Aorta (tissue), 5 donors: ENCODE measurements at regions of chr12 and their contacts with region 1.

Region 1: GRCh38 chr12:103868215-103868614 is 27.2 kb upstream of the NT5DC3 start:
- DNase-seq: no peak
- ATAC-seq: peak; percentile 55
- H3K4me3 ChIP-seq: no peak overlapping the region
- H3K27ac ChIP-seq: peak overlapping the region in 1 of 2 donors; percentile 97
- H3K4me1 ChIP-seq: peaks cover 0 to 3% of the 10 kb centered on the region in 2 donors
- H3K27me3 ChIP-seq: no peaks in the 10 kb centered on the region

Region 2: DNA sequence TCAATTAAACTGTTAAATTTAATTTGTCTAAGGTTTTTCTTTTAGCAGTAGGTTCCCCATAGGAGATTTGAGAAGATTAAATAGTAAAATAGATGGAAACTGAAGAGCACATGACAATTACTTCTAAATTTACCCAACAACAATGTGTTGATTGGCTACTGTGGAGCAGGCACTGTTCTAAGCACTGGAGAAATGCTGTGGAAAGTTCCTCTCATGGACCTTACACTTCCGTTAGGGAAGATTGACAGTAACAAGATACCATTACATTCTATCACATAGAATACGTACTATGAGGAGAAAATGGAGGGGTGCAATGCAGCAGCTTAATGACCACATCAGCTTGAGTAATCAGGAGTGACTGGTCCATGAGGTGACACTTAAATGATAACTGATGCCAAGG is 289.3 kb before region 1 on chr12:
- intact Hi-C with region 1: loop called (anchors 5 to 10 kb)
- DNase-seq: no peak
- ATAC-seq: no peak
- H3K4me3 ChIP-seq: no peak overlapping the region
- H3K27ac ChIP-seq: no peak overlapping the region
- H3K4me1 ChIP-seq: no peaks in the 10 kb centered on the region
- H3K27me3 ChIP-seq: no peaks in the 10 kb centered on the region

Region 3: GRCh38 chr12:103626498-103626897 is 241.7 kb before region 1 on chr12:
- intact Hi-C with region 1: loop called in 1 of 2 experiments (anchors 2 kb)
- DNase-seq: peak in 1 of 2 donors; percentile 61
- ATAC-seq: no peak
- H3K4me3 ChIP-seq: no peak overlapping the region
- H3K27ac ChIP-seq: no peak overlapping the region
- H3K4me1 ChIP-seq: peaks cover 0 to 5% of the 10 kb centered on the region in 2 donors
- H3K27me3 ChIP-seq: no peaks in the 10 kb centered on the region

Region 4: DNA sequence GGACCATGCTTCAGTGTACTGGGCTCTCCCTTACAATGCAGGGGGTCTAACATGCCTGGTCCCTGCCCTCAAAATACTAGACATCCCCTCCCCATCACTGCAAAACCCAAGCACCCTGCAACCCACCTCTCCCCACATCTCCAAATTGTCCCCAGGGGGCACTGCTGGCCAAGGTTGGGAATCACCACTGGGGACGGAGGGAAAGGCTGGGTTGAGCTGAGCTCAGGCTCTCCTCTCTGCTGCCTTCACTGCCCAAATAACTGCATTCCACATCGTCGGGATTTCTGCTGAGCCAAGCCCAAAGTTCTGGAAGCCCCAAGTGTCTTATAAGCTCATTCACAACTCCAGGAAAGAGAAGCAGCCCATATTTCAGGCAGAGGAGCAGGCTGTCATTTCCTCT is 96.7 kb before region 1 on chr12:
- intact Hi-C with region 1: loop called in 1 of 2 experiments (anchors 2 kb)
- DNase-seq: no peak
- ATAC-seq: peak; percentile 80
- H3K4me3 ChIP-seq: no peak overlapping the region
- H3K27ac ChIP-seq: no peak overlapping the region
- H3K4me1 ChIP-seq: no peaks in the 10 kb centered on the region
- H3K27me3 ChIP-seq: no peaks in the 10 kb centered on the region

Region 5: DNA sequence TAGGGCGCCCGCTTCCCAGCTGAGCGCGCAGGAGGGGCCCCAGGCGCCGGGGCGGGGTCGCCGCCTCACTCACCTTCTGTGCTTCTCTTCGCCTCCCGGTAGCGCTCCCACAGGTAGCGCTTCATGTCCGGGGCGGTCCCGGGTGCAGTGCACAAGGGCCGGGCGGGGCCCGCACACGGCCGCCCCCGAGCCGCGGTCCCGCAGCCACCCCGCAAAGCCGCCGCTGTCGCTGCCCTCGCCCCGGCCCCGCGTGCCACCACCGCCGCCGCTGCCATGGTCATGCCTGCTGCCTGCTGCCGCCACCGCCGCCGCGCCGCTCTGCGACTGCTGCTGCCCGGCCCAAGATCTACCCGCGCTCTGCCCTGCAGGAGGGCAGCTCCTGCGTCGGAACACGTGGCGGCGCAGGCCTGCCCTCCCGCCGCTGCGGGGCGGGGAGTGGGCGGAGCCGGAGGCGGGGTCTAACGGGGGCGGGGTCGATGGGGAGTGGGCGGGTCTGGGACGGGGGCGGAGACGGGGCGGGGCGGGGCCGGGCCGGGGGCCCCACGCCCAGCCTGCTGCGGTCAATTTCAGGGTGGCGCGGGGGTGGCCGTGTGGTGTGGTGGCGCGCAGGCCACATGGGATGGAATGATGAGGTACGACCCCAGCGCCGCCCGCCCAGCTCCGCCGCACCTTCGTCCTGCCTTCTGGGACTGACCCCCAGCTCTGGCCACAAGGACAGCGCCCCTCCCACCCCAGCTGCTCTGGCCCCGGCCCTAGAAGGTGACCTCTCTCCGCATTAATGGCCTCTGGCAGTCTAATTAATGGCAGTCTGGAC is 27.1 kb before region 1 on chr12 and contains the start of gene NT5DC3:
- intact Hi-C with region 1: loop called in 1 of 2 experiments (anchors 2 kb)
- DNase-seq: peak; percentile 88 to 95
- ATAC-seq: peak; percentile 95
- H3K4me3 ChIP-seq: peak within 1 kb of the TSS; percentile 96 to 97
- H3K27ac ChIP-seq: peak within 1 kb of the TSS; percentile 78 to 88
- H3K4me1 ChIP-seq: no peaks in the 10 kb centered on the region
- H3K27me3 ChIP-seq: no peaks in the 10 kb centered on the region
- total RNA-seq, gene NT5DC3: 28.1 to 104 TPM

Region 6: DNA sequence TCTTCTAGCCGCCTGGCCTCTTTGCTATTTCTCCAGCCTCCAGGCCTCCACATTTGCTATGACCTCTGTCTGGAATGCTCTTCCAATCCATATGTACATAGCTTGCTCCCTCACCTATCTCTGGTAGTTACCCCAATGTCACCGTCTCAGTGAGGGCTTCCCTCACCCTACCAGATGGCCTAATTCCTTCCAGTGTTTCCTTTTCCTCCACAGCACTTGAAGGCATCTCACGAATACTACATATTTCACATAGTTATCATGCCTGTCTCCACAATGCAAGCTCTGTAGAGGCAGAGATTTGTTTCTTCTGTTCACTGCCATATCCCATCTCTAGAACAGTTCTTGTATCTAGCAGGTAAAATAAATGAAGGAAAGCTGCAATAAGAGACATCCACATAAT is 40.7 kb after region 1 on chr12:
- intact Hi-C with region 1: no loop called
- DNase-seq: no peak
- ATAC-seq: no peak
- H3K4me3 ChIP-seq: no peak overlapping the region
- H3K27ac ChIP-seq: peak overlapping the region in 1 of 2 donors; percentile 21
- H3K4me1 ChIP-seq: peaks cover 3 to 7% of the 10 kb centered on the region in 2 donors
- H3K27me3 ChIP-seq: no peaks in the 10 kb centered on the region

Region 7: GRCh38 chr12:104094284-104094683 is 226.1 kb after region 1 on chr12:
- intact Hi-C with region 1: no loop called
- DNase-seq: no peak
- ATAC-seq: no peak
- H3K4me3 ChIP-seq: no peak overlapping the region
- H3K27ac ChIP-seq: no peak overlapping the region
- H3K4me1 ChIP-seq: no peaks in the 10 kb centered on the region
- H3K27me3 ChIP-seq: no peaks in the 10 kb centered on the region